Activated CD4-positive, alpha-beta T cell treated with anti-CD3 and anti-CD28 coated beads for 36 hours (primary cell): ENCODE measurements at regions of chr7 and their contacts with region 1.

Region 1: GRCh38 chr7:16712916-16713315 is 40.6 kb upstream of the TSPAN13 start:
- DNase-seq: peak; percentile 32
- ATAC-seq: peak; percentile 71
- H3K4me3 Mint-ChIP-seq: no peak overlapping the region
- H3K27ac Mint-ChIP-seq: no peak overlapping the region
- H3K4me1 Mint-ChIP-seq: peaks cover 18% of the 10 kb centered on the region
- H3K27me3 Mint-ChIP-seq: no peaks in the 10 kb centered on the region

Region 2: DNA sequence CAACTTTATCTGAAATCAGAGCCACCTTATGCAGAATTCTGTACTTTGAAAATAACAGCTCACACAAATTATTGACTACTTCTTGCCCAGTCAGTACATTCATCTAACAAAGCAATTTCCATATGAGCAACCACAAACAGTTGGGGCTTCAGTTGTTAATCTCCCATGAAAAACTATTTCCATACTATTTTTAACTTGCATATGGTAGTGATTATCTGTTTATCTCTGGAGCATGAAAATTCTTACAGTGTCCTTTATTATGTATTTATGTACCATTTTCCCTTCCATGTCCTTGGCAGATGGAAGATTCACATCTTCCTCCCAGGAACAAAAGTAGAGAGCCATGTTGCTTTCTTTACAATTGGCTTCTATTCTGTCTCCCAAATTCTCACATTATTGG is 577.3 kb before region 1 on chr7:
- CTCF ChIA-PET with region 1: no interaction called
- POLR2A ChIA-PET with region 1: no interaction called
- intact Hi-C with region 1: no loop called
- DNase-seq: no peak
- ATAC-seq: no peak
- H3K4me3 Mint-ChIP-seq: no peak overlapping the region
- H3K27ac Mint-ChIP-seq: no peak overlapping the region
- H3K4me1 Mint-ChIP-seq: no peaks in the 10 kb centered on the region
- H3K27me3 Mint-ChIP-seq: no peaks in the 10 kb centered on the region

Region 3: GRCh38 chr7:16619979-16620408 is 92.9 kb before region 1 on chr7:
- CTCF ChIA-PET with region 1: no interaction called
- POLR2A ChIA-PET with region 1: no interaction called
- intact Hi-C with region 1: loop called in 1 of 2 experiments (anchors 5 kb)
- DNase-seq: peak; percentile 25
- ATAC-seq: peak; percentile 98
- H3K4me3 Mint-ChIP-seq: peak overlapping the region; percentile 5
- H3K27ac Mint-ChIP-seq: peak overlapping the region; percentile 83
- H3K4me1 Mint-ChIP-seq: peaks cover 20% of the 10 kb centered on the region
- H3K27me3 Mint-ChIP-seq: no peaks in the 10 kb centered on the region

Region 4: DNA sequence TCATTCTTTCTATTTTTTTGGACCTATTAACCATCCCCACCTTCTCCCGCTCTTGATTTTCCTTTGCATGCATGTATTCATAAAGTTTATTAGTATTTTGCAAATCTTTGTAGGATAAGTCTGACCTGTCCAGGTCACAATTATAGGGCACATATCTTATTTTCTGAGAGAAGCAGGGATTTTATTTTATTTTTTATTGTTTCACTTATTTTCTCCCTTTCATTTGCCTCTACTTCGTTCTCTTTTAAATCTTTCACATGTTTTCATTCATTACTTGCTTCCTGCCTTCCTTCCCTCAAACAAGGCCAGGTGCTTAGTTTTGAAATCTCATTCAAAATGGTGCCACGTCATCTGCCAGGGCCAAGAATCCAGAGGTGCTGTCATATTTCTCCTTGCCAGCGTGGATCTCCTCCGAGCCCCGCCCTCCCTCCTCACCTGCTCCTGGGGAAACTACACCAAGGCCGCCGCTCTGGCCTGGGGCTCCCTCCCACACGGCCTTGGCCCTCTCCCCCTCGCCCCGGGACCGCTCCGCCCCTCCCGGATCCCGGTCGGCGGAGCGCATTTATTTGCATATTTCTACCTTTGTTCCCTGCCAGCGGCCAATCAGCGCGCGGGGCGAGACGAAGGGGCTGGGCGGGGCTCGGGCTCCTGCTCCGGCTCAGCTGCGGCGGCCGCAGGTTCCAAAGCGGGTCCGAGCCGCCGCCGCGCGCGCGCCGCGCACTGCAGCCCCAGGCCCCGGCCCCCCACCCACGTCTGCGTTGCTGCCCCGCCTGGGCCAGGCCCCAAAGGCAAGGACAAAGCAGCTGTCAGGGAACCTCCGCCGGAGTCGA is 40.4 kb after region 1 on chr7 and contains the start of gene TSPAN13:
- CTCF ChIA-PET with region 1: no interaction called
- POLR2A ChIA-PET with region 1: no interaction called
- intact Hi-C with region 1: loop called in 1 of 2 experiments (anchors 2 kb)
- DNase-seq: peak; percentile 83
- ATAC-seq: peak; percentile 93
- H3K4me3 Mint-ChIP-seq: peak within 1 kb of the TSS; percentile 71
- H3K27ac Mint-ChIP-seq: no peak within 1 kb of the TSS
- H3K4me1 Mint-ChIP-seq: peaks cover 12% of the 10 kb centered on the region
- H3K27me3 Mint-ChIP-seq: peaks cover 27% of the 10 kb centered on the region
- total RNA-seq, gene TSPAN13: 0.47 to 0.64 TPM

Region 5: DNA sequence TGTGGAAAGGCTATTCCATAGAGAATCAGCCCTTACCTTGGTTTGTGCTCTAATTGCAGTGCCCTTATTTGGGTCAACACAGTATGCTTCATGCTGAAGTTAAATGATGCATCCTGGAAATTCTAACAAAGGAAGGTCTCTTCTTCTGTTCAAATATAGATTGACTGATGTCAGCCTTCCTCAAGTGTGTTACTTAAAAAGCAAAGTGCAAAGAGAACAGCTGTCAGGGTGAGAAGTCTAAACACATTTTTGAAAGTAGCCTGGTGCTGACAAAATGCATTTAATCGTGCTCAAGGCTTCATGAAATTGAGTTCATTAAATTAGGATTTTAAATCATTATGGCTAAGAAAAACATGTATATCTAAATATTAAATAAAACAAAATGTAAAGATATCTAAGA is 72.4 kb after region 1 on chr7:
- CTCF ChIA-PET with region 1: no interaction called
- POLR2A ChIA-PET with region 1: no interaction called
- intact Hi-C with region 1: no loop called
- DNase-seq: no peak
- ATAC-seq: no peak
- H3K4me3 Mint-ChIP-seq: no peak overlapping the region
- H3K27ac Mint-ChIP-seq: no peak overlapping the region
- H3K4me1 Mint-ChIP-seq: no peaks in the 10 kb centered on the region
- H3K27me3 Mint-ChIP-seq: no peaks in the 10 kb centered on the region

Region 6: DNA sequence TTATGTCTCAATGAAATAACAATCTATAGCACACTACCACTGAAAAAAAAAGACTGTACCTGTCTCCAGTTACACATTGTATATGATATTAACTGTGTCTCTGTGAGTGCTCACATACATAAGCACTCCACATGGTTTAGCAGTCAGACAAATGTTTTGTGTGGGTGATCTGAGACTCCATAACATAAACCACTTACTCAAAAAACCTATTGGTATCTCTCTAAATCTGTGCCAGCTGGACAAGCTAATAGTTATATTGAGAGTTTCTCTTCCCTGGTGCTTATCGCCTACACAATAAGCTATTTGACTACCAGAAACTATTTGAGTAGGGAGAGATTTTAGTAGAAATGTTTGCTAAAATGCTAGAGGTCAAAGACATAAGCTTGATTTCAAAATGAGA is 358.9 kb after region 1 on chr7:
- CTCF ChIA-PET with region 1: no interaction called
- POLR2A ChIA-PET with region 1: no interaction called
- intact Hi-C with region 1: no loop called
- DNase-seq: no peak
- ATAC-seq: no peak
- H3K4me3 Mint-ChIP-seq: no peak overlapping the region
- H3K27ac Mint-ChIP-seq: no peak overlapping the region
- H3K4me1 Mint-ChIP-seq: peaks cover 7% of the 10 kb centered on the region
- H3K27me3 Mint-ChIP-seq: peaks cover 2% of the 10 kb centered on the region